ENCODE measurements at regions of chr10 and their contacts with region 1.

Region 1: DNA sequence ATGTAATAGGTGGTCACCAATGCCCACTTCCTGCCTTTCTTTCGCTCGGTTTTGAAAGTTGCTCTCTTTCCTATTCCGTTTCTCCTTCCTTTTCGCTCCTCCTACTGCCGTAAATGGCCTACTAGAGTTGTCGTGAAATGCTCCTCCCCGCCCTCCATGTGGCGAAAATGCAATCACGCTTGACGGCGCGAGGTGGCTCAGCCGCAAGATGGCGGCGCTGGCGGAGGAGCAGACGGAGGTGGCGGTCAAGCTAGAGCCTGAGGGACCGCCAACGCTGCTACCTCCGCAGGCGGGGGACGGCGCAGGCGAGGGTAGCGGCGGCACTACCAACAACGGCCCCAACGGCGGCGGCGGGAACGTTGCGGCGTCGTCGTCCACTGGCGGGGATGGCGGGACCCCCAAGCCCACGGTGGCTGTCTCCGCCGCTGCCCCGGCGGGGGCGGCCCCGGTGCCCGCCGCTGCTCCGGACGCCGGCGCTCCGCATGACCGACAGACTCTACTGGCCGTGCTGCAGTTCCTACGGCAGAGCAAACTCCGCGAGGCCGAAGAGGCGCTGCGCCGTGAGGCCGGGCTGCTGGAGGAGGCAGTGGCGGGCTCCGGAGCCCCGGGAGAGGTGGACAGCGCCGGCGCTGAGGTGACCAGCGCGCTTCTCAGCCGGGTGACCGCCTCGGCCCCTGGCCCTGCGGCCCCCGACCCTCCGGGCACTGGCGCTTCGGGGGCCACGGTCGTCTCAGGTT is at the start of gene TAF5:
- DNase-seq: peak; percentile 98
- ATAC-seq: peak; percentile 75
- H3K4me3 ChIP-seq: peak within 1 kb of the TSS; percentile 73 to 93
- H3K27ac ChIP-seq: peak within 1 kb of the TSS; percentile 80
- H3K4me1 ChIP-seq: peaks cover 7 to 13% of the 10 kb centered on the region in 2 experiments; a peak in 3 of 4 replicates
- H3K27me3 ChIP-seq: no peaks in the 10 kb centered on the region
- CTCF ChIP-seq: 0 out of 6 replicates have a peak, but pooled peaks of 1 of the 3 experiments have one; percentile 1
- POLR2A ChIP-seq: peak; percentile 97
- RAD21 ChIP-seq: no peak
- total RNA-seq, gene TAF5: 9.2 TPM

Region 2: DNA sequence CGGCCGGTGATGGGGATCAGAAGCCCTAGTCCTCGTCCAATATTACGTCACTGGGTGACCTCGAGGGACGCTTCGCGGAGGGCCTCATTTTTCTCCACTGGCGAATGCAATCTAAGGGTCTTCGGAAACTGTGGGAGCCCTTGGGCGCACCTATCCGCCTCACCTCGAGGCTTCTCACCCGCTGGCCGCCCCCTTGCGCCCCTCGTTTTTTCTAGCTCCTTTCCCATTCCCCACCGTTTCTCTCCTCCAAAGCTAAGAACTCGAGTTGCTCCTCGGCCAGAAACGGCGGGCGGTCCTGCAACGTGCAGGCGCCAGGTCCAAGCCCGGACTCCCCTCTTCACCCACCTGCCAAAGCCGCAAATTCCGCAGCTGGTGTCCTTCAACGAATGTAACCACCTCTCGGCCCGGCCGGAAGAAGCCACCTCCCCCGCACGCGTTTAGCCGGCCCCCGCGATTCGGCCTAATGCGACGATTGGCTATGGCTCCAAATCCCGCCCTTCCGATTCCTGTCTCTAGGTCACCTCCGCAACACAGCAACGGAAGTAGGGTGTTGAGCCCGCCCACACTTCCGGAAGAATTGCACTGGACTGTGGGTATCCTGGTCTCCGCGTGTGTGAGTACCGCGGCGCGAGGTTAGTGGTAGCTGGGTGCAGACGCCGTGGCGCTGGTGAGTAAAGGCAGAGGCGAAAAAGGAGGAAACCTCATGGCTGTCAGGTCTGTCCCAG is 28.3 kb after region 1 on chr10 and contains the starts of genes ATP5MK and PDCD11:
- CTCF ChIA-PET with region 1: no interaction called
- POLR2A ChIA-PET with region 1: interaction called, 4 read pairs
- RAD21 ChIA-PET with region 1: no interaction called
- intact Hi-C with region 1: loop called (anchors 1 kb)
- DNase-seq: peak; percentile 98
- ATAC-seq: peak; percentile 99
- H3K4me3 ChIP-seq: peak within 1 kb of the TSS; percentile 83 to 95
- H3K27ac ChIP-seq: peak within 1 kb of the TSS; percentile 71
- H3K4me1 ChIP-seq: peaks cover 13 to 27% of the 10 kb centered on the region in 2 experiments; a peak in 3 of 4 replicates
- H3K27me3 ChIP-seq: no peaks in the 10 kb centered on the region
- CTCF ChIP-seq: peak in 2 of 3 experiments; percentile 33 to 35; a peak in 3 of 6 replicates
- POLR2A ChIP-seq: peak; percentile 95
- RAD21 ChIP-seq: no peak
- total RNA-seq, gene ATP5MK: 556 TPM
- total RNA-seq, gene PDCD11: 106 TPM

Measured in HCT116 (cell line).